Tibial artery (tissue), 4 donors: ENCODE measurements at regions of chr17 and their contacts with region 1.

Region 1: DNA sequence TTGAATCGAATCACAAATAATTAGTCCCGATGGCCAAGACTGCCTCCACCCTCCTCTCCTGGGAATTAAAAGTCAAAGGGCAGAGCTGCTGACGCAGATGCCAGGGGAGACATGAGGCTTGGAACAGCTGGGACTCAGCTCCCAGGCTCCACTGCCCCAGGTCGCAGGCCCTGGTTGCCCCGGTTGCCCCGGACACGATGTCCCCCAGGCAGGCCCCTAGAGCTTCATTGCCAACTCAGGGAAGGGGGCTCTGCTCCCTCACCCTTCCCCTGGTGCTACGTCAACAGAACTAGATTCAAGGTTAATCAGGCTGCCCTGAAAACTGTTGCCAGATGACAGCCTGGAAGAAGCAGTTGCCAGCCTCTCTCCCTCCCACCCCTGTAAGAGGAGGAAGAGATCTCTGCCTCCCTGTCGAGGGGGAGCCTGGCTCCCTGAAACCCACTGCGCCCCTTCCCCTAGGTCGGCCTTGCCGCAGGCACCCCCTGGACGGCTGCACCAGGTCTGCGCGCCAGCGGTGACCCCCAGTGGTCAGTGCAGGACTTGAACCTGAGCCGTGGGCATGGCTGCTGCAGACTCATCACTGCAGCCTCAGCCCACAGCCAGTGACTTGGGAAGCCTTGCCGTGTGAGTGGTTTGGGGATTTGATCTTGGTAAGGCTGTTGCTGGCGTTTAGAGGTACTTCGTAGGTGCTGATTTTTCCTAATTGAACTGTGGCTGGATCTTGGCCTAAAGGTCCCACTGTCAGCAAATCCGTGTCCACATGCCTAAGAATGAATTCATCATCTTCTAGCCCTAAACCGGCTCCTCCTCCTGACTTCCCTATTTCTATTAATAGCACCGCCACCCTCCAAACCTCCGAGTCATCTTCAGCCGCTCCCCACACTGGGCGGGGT is 84.1 kb upstream of the TOB1 start:
- DNase-seq: peak; percentile 84 to 96
- H3K4me3 ChIP-seq: peak overlapping the region; percentile 10 to 29
- H3K27ac ChIP-seq: peak overlapping the region; percentile 88 to 96
- H3K4me1 ChIP-seq: peaks cover 13 to 71% (median 48%) of the 10 kb centered on the region in 4 donors
- H3K27me3 ChIP-seq: no peaks in the 10 kb centered on the region
- CTCF ChIP-seq: peak; percentile 79 to 85

Region 2: GRCh38 chr17:50681263-50682210 is 268.7 kb before region 1 on chr17:
- intact Hi-C with region 1: no loop called
- DNase-seq: peak; percentile 59 to 70
- H3K4me3 ChIP-seq: no peak overlapping the region
- H3K27ac ChIP-seq: no peak overlapping the region
- H3K4me1 ChIP-seq: peaks cover 0 to 20% (median 9%) of the 10 kb centered on the region in 4 donors
- H3K27me3 ChIP-seq: no peaks in the 10 kb centered on the region
- CTCF ChIP-seq: peak; percentile 53 to 72

Region 3: DNA sequence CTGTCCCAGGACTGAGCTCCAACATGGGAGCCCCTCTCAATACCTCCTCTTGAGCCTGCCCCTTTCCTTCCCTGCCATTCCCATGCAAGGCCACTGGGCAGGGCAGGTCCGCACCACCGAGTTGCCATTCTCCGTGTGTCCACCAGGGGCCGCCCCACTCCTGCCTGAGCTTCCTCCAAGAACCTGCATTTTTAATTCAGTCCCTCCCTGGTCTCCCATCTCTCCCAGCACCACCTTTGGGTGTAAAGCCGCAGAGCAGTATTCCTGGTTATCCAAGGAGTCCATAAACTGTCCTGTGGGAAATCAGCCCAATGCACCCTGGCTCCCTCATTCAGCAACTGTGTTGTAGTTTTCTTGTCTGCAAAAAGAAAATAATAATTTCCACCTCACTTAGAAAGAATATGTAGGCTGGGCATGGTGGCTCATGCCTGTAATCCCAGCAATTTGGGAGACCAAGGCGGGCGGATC is 167.0 kb before region 1 on chr17:
- intact Hi-C with region 1: loop called (anchors 10 kb)
- DNase-seq: peak; percentile 77 to 89
- H3K4me3 ChIP-seq: no peak overlapping the region
- H3K27ac ChIP-seq: no peak overlapping the region
- H3K4me1 ChIP-seq: peaks cover 0 to 19% (median 6%) of the 10 kb centered on the region in 4 donors
- H3K27me3 ChIP-seq: no peaks in the 10 kb centered on the region
- CTCF ChIP-seq: peak; percentile 97 to 99

Region 4: GRCh38 chr17:50853015-50853615 is 97.1 kb before region 1 on chr17:
- intact Hi-C with region 1: loop called (anchors 5 kb)
- DNase-seq: peak in 1 of 2 donors; percentile 23
- H3K4me3 ChIP-seq: no peak overlapping the region
- H3K27ac ChIP-seq: peak overlapping the region; percentile 61 to 79
- H3K4me1 ChIP-seq: peaks cover 0 to 15% (median 9%) of the 10 kb centered on the region in 4 donors
- H3K27me3 ChIP-seq: no peaks in the 10 kb centered on the region
- CTCF ChIP-seq: no peak

Region 5: GRCh38 chr17:50865984-50866774 is 84.1 kb before region 1 on chr17 and contains the start of gene TOB1:
- intact Hi-C with region 1: loop called (anchors 1 kb)
- DNase-seq: peak; percentile 97 to 100
- H3K4me3 ChIP-seq: peak within 1 kb of the TSS; percentile 87 to 93
- H3K27ac ChIP-seq: peak within 1 kb of the TSS; percentile 99 to 100
- H3K4me1 ChIP-seq: peaks cover 0 to 39% (median 28%) of the 10 kb centered on the region in 4 donors
- H3K27me3 ChIP-seq: no peaks in the 10 kb centered on the region
- CTCF ChIP-seq: no peak